CD4-positive, alpha-beta T cell (primary cell): ENCODE measurements at regions of chr1 and their contacts with region 1.

Region 1: DNA sequence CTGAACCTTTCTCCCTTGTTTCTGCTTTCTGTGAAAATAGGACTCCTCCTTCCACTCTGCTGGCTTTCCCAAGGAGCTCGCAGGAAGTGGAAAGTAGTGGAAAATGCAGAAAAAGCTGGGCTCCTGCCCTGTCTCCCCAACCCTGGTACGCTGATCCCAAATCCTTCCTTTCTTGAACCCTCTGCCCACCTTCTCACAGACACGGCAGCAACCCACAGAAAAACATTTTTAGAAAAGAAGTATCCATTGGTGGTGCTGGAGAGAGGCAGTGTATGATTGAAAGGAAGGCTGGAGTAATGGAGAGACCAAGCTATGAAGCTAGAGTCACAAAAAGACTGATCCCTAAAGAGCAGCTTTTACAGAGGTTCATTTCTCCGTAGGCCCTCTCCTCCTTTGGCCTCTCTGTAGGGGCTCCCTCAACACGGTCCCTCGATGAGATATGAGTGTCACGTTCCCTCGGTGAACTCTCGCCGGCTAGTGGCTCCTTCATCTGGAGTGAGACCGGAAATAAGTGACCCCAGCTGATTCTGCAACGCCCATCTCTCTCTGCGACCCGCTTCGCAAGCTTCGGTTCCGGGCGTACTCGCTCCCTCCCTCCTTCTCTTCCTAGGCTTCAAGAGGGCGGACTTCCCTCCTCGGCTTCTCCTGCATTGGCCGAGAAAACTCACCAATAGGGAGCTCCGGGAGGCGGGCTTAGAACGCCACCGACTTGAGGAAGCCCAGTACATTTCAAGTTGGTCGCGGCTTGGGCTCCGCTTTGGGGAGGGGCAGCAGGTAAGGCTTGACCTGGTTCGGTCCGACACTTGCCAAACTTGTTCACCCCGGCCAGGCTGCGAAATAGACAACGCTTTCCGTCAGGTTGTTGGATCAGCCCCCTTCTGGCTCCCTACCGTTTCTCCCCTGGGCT is at the starts of genes ANKRD34A and POLR3GL:
- DNase-seq: peak; percentile 75 to 96 (median 88)
- ATAC-seq: peak; percentile 90
- H3K4me3 ChIP-seq: peak within 1 kb of the TSS; percentile 72
- H3K4me3 Mint-ChIP-seq: peak within 1 kb of the TSS; percentile 94
- H3K27ac ChIP-seq: peak within 1 kb of the TSS; percentile 58 to 62
- H3K27ac Mint-ChIP-seq: peak within 1 kb of the TSS; percentile 94
- H3K4me1 ChIP-seq: peaks cover 58% of the 10 kb centered on the region
- H3K4me1 Mint-ChIP-seq: peaks cover 58% of the 10 kb centered on the region
- H3K27me3 ChIP-seq: no peaks in the 10 kb centered on the region
- H3K27me3 Mint-ChIP-seq: no peaks in the 10 kb centered on the region
- CTCF ChIP-seq: no peak
- total RNA-seq, gene ANKRD34A: 0.42 to 0.47 TPM
- total RNA-seq, gene POLR3GL: 17.2 to 17.8 TPM

Region 2: DNA sequence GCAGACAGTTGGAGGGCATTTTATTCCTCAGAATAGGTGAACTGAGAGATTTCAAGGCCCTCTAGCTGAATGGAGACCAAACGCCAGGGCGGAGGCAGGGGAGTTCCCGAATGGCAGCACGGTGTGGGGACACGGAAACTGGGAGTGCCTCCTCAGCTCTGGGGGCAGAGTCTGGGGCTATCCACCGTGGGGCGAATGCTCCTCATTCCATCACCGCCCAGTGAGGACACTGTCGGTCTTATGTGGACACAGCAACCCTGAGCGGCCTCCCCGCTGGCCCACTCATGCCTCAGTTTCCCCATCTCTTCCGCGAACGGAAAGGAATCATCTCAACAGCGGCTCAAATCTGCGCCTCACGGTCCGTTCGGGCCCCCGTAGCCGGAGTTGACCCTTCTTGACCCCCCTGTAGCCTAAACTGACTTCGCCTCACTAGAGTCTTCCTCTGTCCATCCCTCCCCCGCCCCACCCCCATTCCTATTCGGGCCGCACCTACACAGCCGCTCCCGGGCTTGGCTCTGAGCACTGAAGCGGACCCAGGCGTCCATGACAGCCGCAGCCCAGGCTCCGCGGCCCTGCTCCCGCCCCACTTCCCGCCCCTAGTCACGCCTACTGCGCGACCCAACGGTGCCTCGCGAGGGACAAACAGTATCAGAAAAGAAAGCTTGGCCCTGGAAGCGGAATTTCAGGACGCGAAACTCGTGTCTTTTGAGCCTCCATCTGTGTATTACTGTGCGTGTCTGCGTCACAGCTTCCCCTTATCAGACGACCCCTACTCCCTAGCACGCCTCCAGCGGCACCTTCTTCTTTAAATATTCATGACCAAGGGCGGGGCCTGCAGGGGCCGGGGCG is 45.9 kb before region 1 on chr1 and contains the start of gene PEX11B:
- CTCF ChIA-PET with region 1: interaction called, 3 read pairs
- POLR2A ChIA-PET with region 1: interaction called, 61 read pairs
- intact Hi-C with region 1: loop called (anchors 5 kb)
- DNase-seq: peak; percentile 87 to 96 (median 92)
- ATAC-seq: peak; percentile 90
- H3K4me3 ChIP-seq: peak within 1 kb of the TSS; percentile 87
- H3K4me3 Mint-ChIP-seq: peak within 1 kb of the TSS; percentile 94
- H3K27ac ChIP-seq: peak within 1 kb of the TSS; percentile 52 to 60
- H3K27ac Mint-ChIP-seq: peak within 1 kb of the TSS; percentile 92
- H3K4me1 ChIP-seq: peaks cover 31% of the 10 kb centered on the region
- H3K4me1 Mint-ChIP-seq: peaks cover 47% of the 10 kb centered on the region
- H3K27me3 ChIP-seq: no peaks in the 10 kb centered on the region
- H3K27me3 Mint-ChIP-seq: no peaks in the 10 kb centered on the region
- CTCF ChIP-seq: no peak
- total RNA-seq, gene PEX11B: 11.6 to 13.2 TPM

Region 3: DNA sequence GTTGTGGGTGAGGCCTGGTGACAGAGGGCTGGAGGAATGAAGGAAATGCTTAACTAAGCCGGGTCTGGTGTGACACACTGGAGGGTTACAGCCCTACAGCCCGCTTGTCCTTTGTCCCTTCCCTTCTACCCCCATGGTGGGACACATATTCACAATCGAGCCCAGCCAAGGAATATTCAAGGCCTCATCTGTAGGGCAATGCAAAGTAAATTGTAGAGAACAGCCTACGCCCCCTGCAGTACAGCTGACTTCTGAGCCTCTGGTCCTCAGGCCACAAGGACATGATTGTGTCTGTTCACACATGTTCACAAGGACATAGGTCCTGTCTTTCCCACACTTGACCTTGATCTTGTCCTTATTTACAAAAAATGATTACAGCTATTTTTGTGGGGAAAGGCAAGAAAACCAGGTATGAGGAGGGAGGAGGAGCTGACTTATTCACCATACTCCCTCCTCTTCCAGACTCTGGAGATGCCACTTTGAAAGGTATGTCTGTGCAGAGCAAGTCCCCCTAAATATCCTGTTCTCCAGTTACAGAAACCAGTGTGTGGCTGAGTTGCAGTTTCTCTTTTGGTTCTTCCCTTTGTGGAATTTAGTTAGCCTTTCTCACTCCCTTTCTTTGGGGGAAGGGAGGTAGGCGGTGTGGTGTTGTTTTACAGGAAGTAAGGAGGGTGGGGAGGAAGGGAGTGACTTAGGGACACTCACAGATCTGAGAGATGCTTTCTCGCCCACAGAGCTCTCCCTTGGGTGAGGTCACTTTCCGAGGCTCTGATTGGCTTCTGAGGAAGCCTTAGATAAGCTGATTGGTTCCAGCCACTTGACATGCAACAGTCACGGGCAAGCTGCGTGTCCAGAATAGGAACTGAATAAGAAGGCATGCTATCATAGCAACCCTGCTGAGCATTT is 14.9 kb after region 1 on chr1:
- CTCF ChIA-PET with region 1: interaction called, 14 read pairs
- POLR2A ChIA-PET with region 1: interaction called, 74 read pairs
- intact Hi-C with region 1: no loop called
- DNase-seq: peak in 13 of 14 experiments; percentile 45 to 97 (median 66)
- ATAC-seq: peak; percentile 69
- H3K4me3 ChIP-seq: peak overlapping the region; percentile 45
- H3K4me3 Mint-ChIP-seq: no peak overlapping the region
- H3K27ac ChIP-seq: peak overlapping the region; percentile 93 to 94
- H3K27ac Mint-ChIP-seq: no peak overlapping the region
- H3K4me1 ChIP-seq: peaks cover 69% of the 10 kb centered on the region
- H3K4me1 Mint-ChIP-seq: peaks cover 6% of the 10 kb centered on the region
- H3K27me3 ChIP-seq: no peaks in the 10 kb centered on the region
- H3K27me3 Mint-ChIP-seq: no peaks in the 10 kb centered on the region
- CTCF ChIP-seq: peak; percentile 28

Region 4: GRCh38 chr1:146007506-146008133 is 43.4 kb after region 1 on chr1:
- CTCF ChIA-PET with region 1: interaction called, 21 read pairs
- POLR2A ChIA-PET with region 1: interaction called, 8 read pairs
- intact Hi-C with region 1: no loop called
- DNase-seq: no peak
- ATAC-seq: no peak
- H3K4me3 ChIP-seq: no peak overlapping the region
- H3K4me3 Mint-ChIP-seq: peak overlapping the region; percentile 86
- H3K27ac ChIP-seq: no peak overlapping the region
- H3K27ac Mint-ChIP-seq: peak overlapping the region; percentile 86
- H3K4me1 ChIP-seq: peaks cover 47% of the 10 kb centered on the region
- H3K4me1 Mint-ChIP-seq: peaks cover 46% of the 10 kb centered on the region
- H3K27me3 ChIP-seq: no peaks in the 10 kb centered on the region
- H3K27me3 Mint-ChIP-seq: no peaks in the 10 kb centered on the region
- CTCF ChIP-seq: peak; percentile 5